GM12878 (cell line): ENCODE measurements at regions of chr4 and their contacts with region 1.

Region 1: DNA sequence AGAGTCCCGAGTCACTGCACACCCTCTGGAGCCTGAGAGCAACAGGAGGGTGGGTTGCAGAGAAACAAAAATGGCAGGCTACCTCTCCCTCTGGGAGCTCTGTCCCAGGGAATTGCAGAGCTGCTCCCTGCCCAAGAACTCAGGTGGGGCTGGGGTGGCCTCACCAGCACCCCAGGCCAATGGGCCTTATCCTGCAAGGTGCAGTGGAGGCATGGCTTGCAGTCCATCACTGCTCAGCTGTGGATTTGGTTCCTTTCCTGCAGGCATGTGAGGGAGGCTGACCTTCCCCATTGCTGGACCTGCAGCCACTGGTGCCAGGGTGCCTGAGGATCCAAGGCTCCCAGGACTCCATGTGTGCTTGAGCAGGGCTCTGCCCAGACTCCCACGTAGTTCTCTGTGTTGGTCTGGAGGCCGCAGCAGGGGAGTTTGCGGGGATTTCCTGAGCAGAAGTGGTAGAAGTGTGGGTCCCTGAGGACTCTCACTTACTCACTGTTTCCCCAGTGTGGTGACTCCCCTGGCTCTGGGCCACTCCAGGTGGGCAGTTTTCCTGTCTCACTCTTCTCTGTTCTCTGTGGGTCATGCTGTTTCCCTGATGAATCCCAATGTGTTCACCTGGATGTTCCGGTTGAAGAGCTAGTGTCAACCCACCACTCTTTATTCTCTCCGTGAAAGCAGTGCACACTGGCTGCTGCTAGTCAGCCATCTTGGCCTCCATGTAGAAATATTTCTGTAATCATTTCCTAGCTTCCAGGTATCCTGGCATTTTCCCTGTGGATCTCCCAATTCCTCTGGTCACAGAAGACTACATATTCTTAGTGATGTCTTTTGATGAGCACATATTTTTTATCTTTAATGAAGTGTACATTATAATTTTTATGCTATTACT is 82.3 kb downstream of the ARHGAP24 start:
- DNase-seq: peak; percentile 68
- ATAC-seq: peak; percentile 94
- H3K4me3 ChIP-seq: no peak overlapping the region
- H3K27ac ChIP-seq: peak overlapping the region; percentile 41
- H3K4me1 ChIP-seq: peaks cover 27% of the 10 kb centered on the region
- H3K27me3 ChIP-seq: no peaks in the 10 kb centered on the region
- CTCF ChIP-seq: no peak
- EP300 ChIP-seq: peak; percentile 65 to 90; a peak in 3 of 4 replicates
- POLR2A ChIP-seq: no peak
- RAD21 ChIP-seq: no peak; the same call in 1 of the 2 replicates

Region 2: GRCh38 chr4:85474818-85475630 is 82.2 kb before region 1 on chr4 and contains the start of gene ARHGAP24:
- CTCF ChIA-PET with region 1: no interaction called
- POLR2A ChIA-PET with region 1: no interaction called
- RAD21 ChIA-PET with region 1: interaction called, 10 read pairs
- SMC1A ChIA-PET with region 1: interaction called, 3 read pairs
- in situ Hi-C with region 1: no loop called
- intact Hi-C with region 1: loop called (anchors 2 kb)
- DNase-seq: peak; percentile 51
- ATAC-seq: peak; percentile 88
- H3K4me3 ChIP-seq: peak within 1 kb of the TSS; percentile 62
- H3K27ac ChIP-seq: no peak within 1 kb of the TSS
- H3K4me1 ChIP-seq: peaks cover 5% of the 10 kb centered on the region
- H3K27me3 ChIP-seq: peaks cover 0 to 2% of the 10 kb centered on the region in 2 experiments; a peak in 1 of 4 replicates
- CTCF ChIP-seq: no peak
- EP300 ChIP-seq: no peak
- POLR2A ChIP-seq: no peak
- RAD21 ChIP-seq: no peak
- polyA plus RNA-seq, gene ARHGAP24: 0.10 to 0.35 TPM

Region 3: DNA sequence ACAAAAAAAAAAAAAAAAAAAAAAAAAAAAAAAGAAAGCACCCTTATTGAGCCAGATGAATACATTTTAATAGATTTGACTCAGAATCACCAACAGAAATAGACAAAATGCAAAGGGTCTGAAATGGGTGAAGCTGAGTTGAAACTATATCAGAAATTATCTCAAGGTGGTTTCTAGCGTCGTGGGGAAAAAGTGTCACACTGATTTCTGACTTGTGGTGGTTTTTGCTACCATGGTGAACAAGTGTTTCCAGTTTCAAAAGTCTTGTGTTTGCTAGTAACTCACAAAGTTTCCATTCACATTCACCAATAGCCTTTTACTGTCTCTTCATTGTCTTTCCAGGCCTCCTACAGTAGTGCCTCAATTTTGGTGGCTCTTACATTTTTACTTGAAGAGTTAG is 53.2 kb after region 1 on chr4:
- CTCF ChIA-PET with region 1: no interaction called
- POLR2A ChIA-PET with region 1: no interaction called
- RAD21 ChIA-PET with region 1: no interaction called
- SMC1A ChIA-PET with region 1: interaction called, 3 read pairs
- in situ Hi-C with region 1: no loop called
- intact Hi-C with region 1: loop called (anchors 2 kb)
- DNase-seq: peak; percentile 94
- ATAC-seq: peak; percentile 94
- H3K4me3 ChIP-seq: no peak overlapping the region
- H3K27ac ChIP-seq: peak overlapping the region; percentile 13; the same call in 1 of the 2 replicates
- H3K4me1 ChIP-seq: peaks cover 13% of the 10 kb centered on the region
- H3K27me3 ChIP-seq: no peaks in the 10 kb centered on the region
- CTCF ChIP-seq: no peak
- EP300 ChIP-seq: peak; percentile 42 to 78; a peak in 3 of 4 replicates
- POLR2A ChIP-seq: no peak
- RAD21 ChIP-seq: no peak

Region 4: GRCh38 chr4:85701861-85702321 is 144.6 kb after region 1 on chr4:
- CTCF ChIA-PET with region 1: no interaction called
- POLR2A ChIA-PET with region 1: no interaction called
- RAD21 ChIA-PET with region 1: no interaction called
- SMC1A ChIA-PET with region 1: no interaction called
- in situ Hi-C with region 1: no loop called
- intact Hi-C with region 1: loop called (anchors 2 kb)
- DNase-seq: peak; percentile 62
- ATAC-seq: peak; percentile 98
- H3K4me3 ChIP-seq: no peak overlapping the region
- H3K27ac ChIP-seq: peak overlapping the region; percentile 50
- H3K4me1 ChIP-seq: peaks cover 23% of the 10 kb centered on the region; the same call in 1 of the 2 replicates
- H3K27me3 ChIP-seq: no peaks in the 10 kb centered on the region
- CTCF ChIP-seq: no peak
- EP300 ChIP-seq: peak; percentile 61 to 62; a peak in 2 of 4 replicates
- POLR2A ChIP-seq: no peak
- RAD21 ChIP-seq: no peak

Region 5: GRCh38 chr4:85772470-85772869 is 215.2 kb after region 1 on chr4:
- CTCF ChIA-PET with region 1: no interaction called
- POLR2A ChIA-PET with region 1: no interaction called
- RAD21 ChIA-PET with region 1: no interaction called
- SMC1A ChIA-PET with region 1: no interaction called
- in situ Hi-C with region 1: no loop called
- intact Hi-C with region 1: no loop called
- DNase-seq: no peak
- ATAC-seq: no peak
- H3K4me3 ChIP-seq: no peak overlapping the region
- H3K27ac ChIP-seq: no peak overlapping the region
- H3K4me1 ChIP-seq: no peaks in the 10 kb centered on the region
- H3K27me3 ChIP-seq: no peaks in the 10 kb centered on the region; a peak in 1 of 4 replicates
- CTCF ChIP-seq: no peak
- EP300 ChIP-seq: no peak
- POLR2A ChIP-seq: no peak
- RAD21 ChIP-seq: no peak